ENCODE measurements at regions of chr6 and their contacts with region 1.

Region 1: DNA sequence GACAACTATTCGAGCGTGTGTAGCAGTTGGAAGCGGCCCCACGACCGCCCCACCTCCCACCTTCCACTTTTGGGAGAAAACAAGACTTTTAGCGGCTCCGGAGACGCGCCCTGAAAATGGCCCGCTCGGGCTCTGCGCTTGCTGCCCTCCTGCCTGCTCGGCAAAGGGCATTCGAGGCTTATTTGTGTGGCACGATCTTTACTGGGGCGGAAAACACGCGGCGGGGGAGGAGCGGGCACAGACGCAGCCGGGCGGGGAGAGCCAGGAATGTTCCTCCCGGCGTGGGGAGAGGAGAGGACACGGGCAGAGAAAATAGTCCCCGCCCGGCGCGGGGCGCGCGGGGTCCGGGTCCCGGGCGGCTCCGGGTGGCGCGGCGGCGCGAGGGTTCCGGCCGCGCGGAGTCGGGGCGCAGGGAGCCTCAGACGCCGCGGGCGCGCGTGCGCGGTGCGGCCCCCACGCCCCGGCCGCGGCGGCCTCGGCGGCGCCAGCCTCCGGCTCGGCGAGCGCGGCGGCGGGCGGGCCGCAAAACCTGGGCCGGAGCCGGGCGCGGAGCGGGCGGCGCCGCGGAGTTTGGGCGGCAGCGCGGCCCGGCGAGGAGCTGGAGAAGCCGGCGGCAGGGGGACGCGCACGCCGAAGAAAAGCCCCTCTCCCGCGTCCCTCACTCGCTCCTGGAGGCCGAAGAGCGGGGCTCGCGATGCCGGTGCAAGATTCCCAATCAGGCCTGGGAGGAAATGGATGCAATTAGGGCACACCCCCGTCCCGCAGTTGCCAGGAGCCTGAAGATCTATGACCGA is 90.0 kb upstream of the ARID1B start:
- DNase-seq: peak; percentile 86 to 99 (median 98)
- ATAC-seq: peak; percentile 88
- H3K4me3 ChIP-seq: peak overlapping the region; percentile 75
- H3K27ac ChIP-seq: peak overlapping the region; percentile 90
- H3K4me1 ChIP-seq: peaks cover 7 to 16% of the 10 kb centered on the region in 2 experiments; a peak in 4 of 5 replicates
- H3K27me3 ChIP-seq: peaks cover 3 to 4% of the 10 kb centered on the region in 2 experiments; a peak in 2 of 5 replicates
- CTCF ChIP-seq: no peak
- EP300 ChIP-seq: no peak; the same call in 1 of the 2 replicates
- POLR2A ChIP-seq: peak; percentile 95
- RAD21 ChIP-seq: 0 out of 4 replicates have a peak, but pooled peaks of 1 of the 2 experiments have one; percentile 7

Region 2: GRCh38 chr6:156508923-156509322 is 178.3 kb before region 1 on chr6:
- CTCF ChIA-PET with region 1: no interaction called
- POLR2A ChIA-PET with region 1: no interaction called
- in situ Hi-C with region 1: no loop called
- intact Hi-C with region 1: no loop called
- DNase-seq: no peak
- ATAC-seq: no peak
- H3K4me3 ChIP-seq: no peak overlapping the region
- H3K27ac ChIP-seq: no peak overlapping the region
- H3K4me1 ChIP-seq: no peaks in the 10 kb centered on the region
- H3K27me3 ChIP-seq: peaks cover 7 to 21% of the 10 kb centered on the region in 2 experiments; a peak in 3 of 5 replicates
- CTCF ChIP-seq: no peak
- EP300 ChIP-seq: no peak
- POLR2A ChIP-seq: no peak
- RAD21 ChIP-seq: no peak

Region 3: GRCh38 chr6:156719720-156720563 is 32.8 kb after region 1 on chr6:
- CTCF ChIA-PET with region 1: no interaction called
- POLR2A ChIA-PET with region 1: no interaction called
- in situ Hi-C with region 1: no loop called
- intact Hi-C with region 1: loop called (anchors 2 kb)
- DNase-seq: peak; percentile 87 to 97 (median 90)
- ATAC-seq: peak; percentile 97
- H3K4me3 ChIP-seq: peak overlapping the region; percentile 29
- H3K27ac ChIP-seq: peak overlapping the region; percentile 90
- H3K4me1 ChIP-seq: peaks cover 33% of the 10 kb centered on the region in 2 experiments
- H3K27me3 ChIP-seq: no peaks in the 10 kb centered on the region
- CTCF ChIP-seq: no peak
- EP300 ChIP-seq: peak; percentile 52
- POLR2A ChIP-seq: peak; percentile 77
- RAD21 ChIP-seq: peak in 1 of 2 experiments; percentile 27; a peak in 2 of 4 replicates

Region 4: GRCh38 chr6:156776840-156777576 is 89.8 kb after region 1 on chr6 and contains the start of gene ARID1B:
- CTCF ChIA-PET with region 1: interaction called, 4 read pairs
- POLR2A ChIA-PET with region 1: interaction called, 3 read pairs
- in situ Hi-C with region 1: no loop called
- intact Hi-C with region 1: loop called (anchors 1 kb)
- DNase-seq: peak; percentile 75 to 83 (median 80)
- ATAC-seq: peak; percentile 49
- H3K4me3 ChIP-seq: peak within 1 kb of the TSS; percentile 75
- H3K27ac ChIP-seq: peak within 1 kb of the TSS; percentile 95
- H3K4me1 ChIP-seq: peaks cover 8 to 15% of the 10 kb centered on the region in 2 experiments; a peak in 3 of 5 replicates
- H3K27me3 ChIP-seq: no peaks in the 10 kb centered on the region
- CTCF ChIP-seq: no peak
- EP300 ChIP-seq: no peak
- POLR2A ChIP-seq: peak; percentile 81
- RAD21 ChIP-seq: peak in 1 of 2 experiments; percentile 15; a peak in 1 of 4 replicates
- polyA plus RNA-seq, gene ARID1B: 12.5 to 25.8 TPM

Region 5: DNA sequence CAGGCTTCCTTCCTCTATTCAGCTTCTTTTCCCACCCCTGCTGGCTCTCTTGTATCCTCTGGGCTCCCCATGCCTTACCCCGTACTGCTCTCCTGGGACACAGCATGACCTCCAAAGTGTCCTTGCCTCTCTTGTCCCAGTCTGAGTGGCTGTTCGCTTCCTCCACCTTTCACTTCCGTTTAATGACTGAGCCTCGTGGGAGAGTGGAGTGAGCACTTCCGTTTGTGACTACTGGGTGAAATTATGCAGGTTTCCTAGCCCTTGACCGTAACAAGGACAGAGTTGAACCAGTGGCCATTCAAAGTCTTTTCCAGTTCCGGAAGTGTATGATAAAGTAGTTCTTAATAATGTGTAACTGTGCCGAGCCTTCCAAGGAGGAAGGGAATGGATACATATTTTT is 199.2 kb after region 1 on chr6:
- CTCF ChIA-PET with region 1: no interaction called
- POLR2A ChIA-PET with region 1: no interaction called
- in situ Hi-C with region 1: no loop called
- intact Hi-C with region 1: loop called (anchors 10 kb)
- DNase-seq: peak in 2 of 4 experiments; percentile 57 to 62
- ATAC-seq: peak; percentile 73
- H3K4me3 ChIP-seq: no peak overlapping the region
- H3K27ac ChIP-seq: peak overlapping the region; percentile 51
- H3K4me1 ChIP-seq: peaks cover 3 to 24% of the 10 kb centered on the region in 2 experiments; a peak in 3 of 5 replicates
- H3K27me3 ChIP-seq: no peaks in the 10 kb centered on the region
- CTCF ChIP-seq: no peak
- EP300 ChIP-seq: no peak
- POLR2A ChIP-seq: no peak
- RAD21 ChIP-seq: no peak

Region 6: GRCh38 chr6:157075549-157076450 is 388.6 kb after region 1 on chr6:
- CTCF ChIA-PET with region 1: no interaction called
- POLR2A ChIA-PET with region 1: no interaction called
- in situ Hi-C with region 1: no loop called
- intact Hi-C with region 1: no loop called
- DNase-seq: peak in 1 of 4 experiments; percentile 38
- ATAC-seq: peak; percentile 65
- H3K4me3 ChIP-seq: no peak overlapping the region
- H3K27ac ChIP-seq: peak overlapping the region; percentile 13; the same call in 1 of the 3 replicates
- H3K4me1 ChIP-seq: peaks cover 0 to 7% of the 10 kb centered on the region in 2 experiments; a peak in 3 of 5 replicates
- H3K27me3 ChIP-seq: no peaks in the 10 kb centered on the region
- CTCF ChIP-seq: no peak
- EP300 ChIP-seq: no peak
- POLR2A ChIP-seq: no peak
- RAD21 ChIP-seq: no peak

Measured in K562 (cell line).